ENCODE measurements at regions of chr11 and their contacts with region 1.

Region 1: GRCh38 chr11:107689317-107690202 is 22.3 kb downstream of the SLN start:
- DNase-seq: peak in 3 of 4 donors; percentile 70 to 88 (median 74)
- ATAC-seq: peak; percentile 99
- H3K4me3 ChIP-seq: no peak overlapping the region
- H3K27ac ChIP-seq: no peak overlapping the region
- H3K4me1 ChIP-seq: peaks cover 0 to 4% of the 10 kb centered on the region in 2 donors
- H3K27me3 ChIP-seq: peaks cover 0 to 17% of the 10 kb centered on the region in 2 donors
- CTCF ChIP-seq: peak; percentile 31 to 60

Region 2: GRCh38 chr11:107577346-107577711 is 112.2 kb before region 1 on chr11:
- intact Hi-C with region 1: loop called in 1 of 2 experiments (anchors 5 kb)
- DNase-seq: no peak
- ATAC-seq: peak; percentile 87
- H3K4me3 ChIP-seq: no peak overlapping the region
- H3K27ac ChIP-seq: no peak overlapping the region
- H3K4me1 ChIP-seq: no peaks in the 10 kb centered on the region
- H3K27me3 ChIP-seq: no peaks in the 10 kb centered on the region
- CTCF ChIP-seq: no peak

Region 3: GRCh38 chr11:107587306-107587979 is 102.1 kb before region 1 on chr11:
- intact Hi-C with region 1: no loop called
- DNase-seq: no peak
- ATAC-seq: no peak
- H3K4me3 ChIP-seq: no peak overlapping the region
- H3K27ac ChIP-seq: no peak overlapping the region
- H3K4me1 ChIP-seq: peaks cover 10 to 19% of the 10 kb centered on the region in 2 donors
- H3K27me3 ChIP-seq: peaks cover 13 to 66% of the 10 kb centered on the region in 2 donors
- CTCF ChIP-seq: no peak

Region 4: GRCh38 chr11:107741044-107741823 is 51.7 kb after region 1 on chr11:
- intact Hi-C with region 1: no loop called
- DNase-seq: peak in 3 of 4 donors; percentile 21 to 68 (median 55)
- ATAC-seq: peak; percentile 97
- H3K4me3 ChIP-seq: no peak overlapping the region
- H3K27ac ChIP-seq: no peak overlapping the region
- H3K4me1 ChIP-seq: no peaks in the 10 kb centered on the region
- H3K27me3 ChIP-seq: no peaks in the 10 kb centered on the region
- CTCF ChIP-seq: peak; percentile 24 to 44